Activated CD8-positive, alpha-beta T cell treated with anti-CD3 and anti-CD28 coated beads for 36 hours (primary cell): ENCODE measurements at regions of chr10 and their contacts with region 1.

Region 1: DNA sequence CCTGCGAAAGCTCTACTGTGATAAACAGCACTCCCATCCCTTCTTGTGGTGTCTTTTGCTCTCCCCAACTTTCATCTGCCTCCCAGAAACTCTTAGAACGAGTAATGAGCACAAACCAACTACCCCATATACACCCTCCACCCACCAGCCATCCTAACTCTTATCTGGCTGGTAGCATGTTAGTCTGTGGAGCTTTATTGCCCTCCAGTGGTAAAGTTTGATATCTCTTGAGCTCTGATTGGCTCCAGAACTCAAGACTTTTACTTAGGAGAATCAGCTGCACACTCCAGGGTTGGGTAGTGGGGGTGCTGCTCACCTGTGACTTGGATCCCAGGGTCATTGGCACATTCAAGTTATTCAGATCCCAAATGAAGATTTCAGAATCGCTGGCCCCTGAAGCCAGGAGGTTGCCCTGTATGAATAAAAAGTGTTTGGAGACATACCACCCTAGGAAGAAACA is 10.9 kb downstream of the SEC31B start:
- DNase-seq: peak; percentile 65
- ATAC-seq: peak; percentile 48
- H3K4me3 Mint-ChIP-seq: peak overlapping the region; percentile 59
- H3K27ac Mint-ChIP-seq: peak overlapping the region; percentile 95
- H3K4me1 Mint-ChIP-seq: peaks cover 72% of the 10 kb centered on the region
- H3K27me3 Mint-ChIP-seq: no peaks in the 10 kb centered on the region
- CTCF ChIP-seq: peak; percentile 91

Region 2: DNA sequence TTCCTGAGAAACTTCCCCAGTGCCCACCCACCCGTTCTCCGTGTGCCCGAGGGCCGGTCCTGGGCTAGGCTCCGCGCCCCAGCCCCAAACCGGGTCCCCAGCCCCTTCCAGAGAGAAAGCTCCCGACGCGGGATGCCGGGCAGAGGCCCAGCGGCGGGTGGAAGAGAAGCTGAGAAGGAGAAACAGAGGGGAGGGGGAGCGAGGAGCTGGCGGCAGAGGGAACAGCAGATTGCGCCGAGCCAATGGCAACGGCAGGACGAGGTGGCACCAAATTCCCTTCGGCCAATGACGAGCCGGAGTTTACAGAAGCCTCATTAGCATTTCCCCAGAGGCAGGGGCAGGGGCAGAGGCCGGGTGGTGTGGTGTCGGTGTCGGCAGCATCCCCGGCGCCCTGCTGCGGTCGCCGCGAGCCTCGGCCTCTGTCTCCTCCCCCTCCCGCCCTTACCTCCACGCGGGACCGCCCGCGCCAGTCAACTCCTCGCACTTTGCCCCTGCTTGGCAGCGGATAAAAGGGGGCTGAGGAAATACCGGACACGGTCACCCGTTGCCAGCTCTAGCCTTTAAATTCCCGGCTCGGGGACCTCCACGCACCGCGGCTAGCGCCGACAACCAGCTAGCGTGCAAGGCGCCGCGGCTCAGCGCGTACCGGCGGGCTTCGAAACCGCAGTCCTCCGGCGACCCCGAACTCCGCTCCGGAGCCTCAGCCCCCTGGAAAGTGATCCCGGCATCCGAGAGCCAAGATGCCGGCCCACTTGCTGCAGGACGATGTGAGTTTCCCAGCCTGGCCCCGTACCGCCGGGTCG is 161.8 kb before region 1 on chr10 and contains the start of gene SCD:
- CTCF ChIA-PET with region 1: interaction called, 82 read pairs
- POLR2A ChIA-PET with region 1: interaction called, 22 read pairs
- intact Hi-C with region 1: no loop called
- DNase-seq: peak; percentile 94
- ATAC-seq: peak; percentile 90
- H3K4me3 Mint-ChIP-seq: peak within 1 kb of the TSS; percentile 99
- H3K27ac Mint-ChIP-seq: peak within 1 kb of the TSS; percentile 94
- H3K4me1 Mint-ChIP-seq: peaks cover 50% of the 10 kb centered on the region
- H3K27me3 Mint-ChIP-seq: no peaks in the 10 kb centered on the region
- CTCF ChIP-seq: no peak
- total RNA-seq, gene SCD: 271 TPM

Region 3: DNA sequence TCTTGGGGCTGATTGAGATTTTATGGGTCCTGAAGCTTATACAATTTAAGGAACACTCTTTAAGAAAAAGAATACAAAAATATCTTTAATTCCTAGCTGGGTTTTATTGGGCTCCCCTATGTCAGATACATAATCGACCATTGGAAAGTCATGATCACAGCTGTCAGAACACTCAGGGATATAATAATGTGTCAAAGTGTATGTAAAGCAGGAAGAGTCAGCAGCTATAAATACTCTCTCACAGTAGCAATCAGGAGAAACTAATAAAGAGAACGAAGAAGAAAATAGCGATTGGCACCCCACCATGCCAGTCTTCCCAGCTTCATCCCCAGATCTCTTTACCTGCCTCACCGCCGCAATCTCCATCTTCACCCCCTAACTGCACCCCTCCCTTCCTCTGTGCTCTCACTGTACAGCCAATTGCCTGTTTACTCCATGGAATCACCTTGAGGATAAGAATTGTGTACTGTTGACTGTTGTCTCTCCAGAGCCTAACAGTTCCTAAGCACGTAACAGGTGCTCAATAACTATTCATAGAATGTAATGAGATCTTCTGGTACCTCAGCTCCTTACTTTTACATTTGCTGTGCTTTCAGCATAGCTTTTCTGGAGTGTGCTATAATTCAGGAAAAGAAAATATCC is 69.9 kb before region 1 on chr10:
- CTCF ChIA-PET with region 1: interaction called, 153 read pairs
- POLR2A ChIA-PET with region 1: interaction called, 4 read pairs
- intact Hi-C with region 1: loop called (anchors 1 kb)
- DNase-seq: no peak
- ATAC-seq: no peak
- H3K4me3 Mint-ChIP-seq: no peak overlapping the region
- H3K27ac Mint-ChIP-seq: no peak overlapping the region
- H3K4me1 Mint-ChIP-seq: peaks cover 2% of the 10 kb centered on the region
- H3K27me3 Mint-ChIP-seq: no peaks in the 10 kb centered on the region
- CTCF ChIP-seq: no peak

Region 4: DNA sequence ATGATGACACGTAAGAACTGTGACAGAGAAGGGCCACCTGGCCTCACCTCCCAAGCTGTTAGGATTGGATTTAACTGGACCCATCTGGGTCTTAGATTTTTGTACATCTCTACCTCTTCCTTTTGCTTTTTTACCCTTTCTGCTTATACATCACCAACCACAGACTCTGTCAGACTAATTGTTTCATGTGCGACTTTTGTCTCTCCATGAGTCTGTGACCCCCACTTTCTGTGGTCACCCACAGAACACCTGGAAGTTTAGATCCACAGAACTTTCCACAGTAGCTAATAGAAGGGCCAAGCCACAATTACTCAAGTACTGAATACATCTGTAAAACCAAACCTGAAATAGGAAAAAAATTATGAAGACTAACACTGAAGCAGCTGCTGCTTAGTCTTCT is 12.2 kb before region 1 on chr10:
- CTCF ChIA-PET with region 1: interaction called, 58 read pairs
- POLR2A ChIA-PET with region 1: interaction called, 11 read pairs
- intact Hi-C with region 1: no loop called
- DNase-seq: peak; percentile 50
- ATAC-seq: peak; percentile 60
- H3K4me3 Mint-ChIP-seq: no peak overlapping the region
- H3K27ac Mint-ChIP-seq: peak overlapping the region; percentile 23
- H3K4me1 Mint-ChIP-seq: peaks cover 17% of the 10 kb centered on the region
- H3K27me3 Mint-ChIP-seq: no peaks in the 10 kb centered on the region
- CTCF ChIP-seq: no peak

Region 5: GRCh38 chr10:100535715-100536353 is 27.1 kb after region 1 on chr10 and contains the start of gene HIF1AN:
- CTCF ChIA-PET with region 1: interaction called, 39 read pairs
- POLR2A ChIA-PET with region 1: interaction called, 3 read pairs
- intact Hi-C with region 1: no loop called
- DNase-seq: peak; percentile 96
- ATAC-seq: peak; percentile 98
- H3K4me3 Mint-ChIP-seq: no peak within 1 kb of the TSS
- H3K27ac Mint-ChIP-seq: no peak within 1 kb of the TSS
- H3K4me1 Mint-ChIP-seq: peaks cover 22% of the 10 kb centered on the region
- H3K27me3 Mint-ChIP-seq: no peaks in the 10 kb centered on the region
- CTCF ChIP-seq: peak; percentile 76
- total RNA-seq, gene HIF1AN: 35.3 to 36.5 TPM

Region 6: GRCh38 chr10:100728928-100729861 is 220.5 kb after region 1 on chr10:
- CTCF ChIA-PET with region 1: no interaction called
- POLR2A ChIA-PET with region 1: no interaction called
- intact Hi-C with region 1: no loop called
- DNase-seq: peak; percentile 68
- ATAC-seq: peak; percentile 63
- H3K4me3 Mint-ChIP-seq: peak overlapping the region; percentile 7
- H3K27ac Mint-ChIP-seq: no peak overlapping the region
- H3K4me1 Mint-ChIP-seq: peaks cover 24% of the 10 kb centered on the region
- H3K27me3 Mint-ChIP-seq: peaks cover 80% of the 10 kb centered on the region
- CTCF ChIP-seq: no peak